ENCODE measurements at regions of chr22 and their contacts with region 1.

Region 1: GRCh38 chr22:20495861-20496681 is 476 bp upstream of the KLHL22 start:
- DNase-seq: peak; percentile 96
- ATAC-seq: peak; percentile 95
- H3K4me3 Mint-ChIP-seq: peak overlapping the region; percentile 76
- H3K27ac Mint-ChIP-seq: peak overlapping the region; percentile 70
- H3K4me1 Mint-ChIP-seq: peaks cover 29% of the 10 kb centered on the region
- H3K27me3 Mint-ChIP-seq: no peaks in the 10 kb centered on the region

Region 2: GRCh38 chr22:20319745-20320658 is 176.1 kb before region 1 on chr22 and contains the start of gene DGCR6L:
- CTCF ChIA-PET with region 1: interaction called, 6 read pairs
- POLR2A ChIA-PET with region 1: no interaction called
- intact Hi-C with region 1: loop called in 1 of 2 experiments (anchors 1 kb)
- DNase-seq: peak; percentile 99
- ATAC-seq: peak; percentile 53
- H3K4me3 Mint-ChIP-seq: peak within 1 kb of the TSS; percentile 85
- H3K27ac Mint-ChIP-seq: peak within 1 kb of the TSS; percentile 79
- H3K4me1 Mint-ChIP-seq: peaks cover 55% of the 10 kb centered on the region
- H3K27me3 Mint-ChIP-seq: no peaks in the 10 kb centered on the region
- total RNA-seq, gene DGCR6L: 22.4 to 24.8 TPM

Region 3: DNA sequence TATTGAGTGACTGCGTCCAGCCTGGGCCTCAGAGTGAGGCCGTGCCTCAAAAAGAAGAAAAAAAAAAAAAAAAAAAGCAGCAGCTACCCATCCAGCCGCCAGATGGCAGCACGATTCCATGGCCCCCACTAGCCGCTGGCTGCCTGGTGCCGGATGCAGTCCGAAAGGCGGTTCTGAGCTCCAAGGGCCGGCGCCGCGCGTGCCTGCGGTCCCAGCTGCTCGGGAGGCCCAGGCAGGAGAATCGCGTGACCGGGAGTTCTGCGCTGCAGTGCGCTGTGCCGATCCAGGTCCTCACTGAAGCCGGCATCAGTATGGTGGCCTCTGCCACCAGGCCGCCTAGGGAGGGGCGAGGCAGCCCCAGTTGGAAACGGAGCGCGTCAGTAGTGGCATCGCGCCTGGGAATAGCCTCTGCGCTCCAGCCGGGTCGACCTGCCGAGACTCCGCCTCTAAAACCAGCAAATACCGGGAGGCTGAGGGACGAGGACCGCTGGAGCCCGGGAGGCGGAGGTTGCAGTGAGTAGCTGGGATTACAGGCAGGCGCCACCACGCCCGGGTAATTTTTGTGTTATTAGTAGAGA is 77.8 kb before region 1 on chr22:
- CTCF ChIA-PET with region 1: no interaction called
- POLR2A ChIA-PET with region 1: no interaction called
- intact Hi-C with region 1: loop called (anchors 1 kb)
- DNase-seq: peak; percentile 82
- ATAC-seq: peak; percentile 71
- H3K4me3 Mint-ChIP-seq: no peak overlapping the region
- H3K27ac Mint-ChIP-seq: no peak overlapping the region
- H3K4me1 Mint-ChIP-seq: no peaks in the 10 kb centered on the region
- H3K27me3 Mint-ChIP-seq: no peaks in the 10 kb centered on the region

Region 4: DNA sequence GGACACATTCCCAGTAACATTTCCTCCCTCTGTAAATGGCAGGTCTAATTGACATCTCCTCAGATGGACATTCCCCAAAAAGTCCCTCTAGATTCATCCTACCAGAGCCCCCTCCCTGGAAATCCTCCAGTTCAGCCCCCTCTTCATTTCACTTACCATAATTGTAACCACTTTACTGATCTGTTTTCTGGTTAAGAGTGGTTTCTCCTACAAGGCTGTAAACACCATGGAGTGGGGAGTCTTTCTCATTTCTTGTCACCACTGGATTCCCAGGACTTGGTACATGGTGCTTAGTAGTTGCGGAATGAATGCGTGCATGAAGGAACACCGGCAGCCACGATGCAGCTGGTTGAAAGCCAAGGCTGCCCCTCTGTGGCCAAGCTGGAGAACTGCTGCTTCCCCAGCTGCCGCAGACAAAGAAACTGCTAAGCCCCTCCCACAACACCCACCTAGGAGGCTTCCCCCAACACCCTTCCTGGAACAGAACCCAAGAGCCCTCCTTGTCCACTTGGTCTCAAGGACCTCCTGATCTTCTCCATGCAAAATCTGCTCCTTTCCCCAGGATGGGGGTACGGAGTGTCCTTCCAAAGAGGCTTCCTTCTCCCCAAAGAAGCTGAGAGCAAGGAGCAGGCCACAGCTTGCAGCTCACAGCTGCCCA is 39.9 kb before region 1 on chr22:
- CTCF ChIA-PET with region 1: interaction called, 14 read pairs
- POLR2A ChIA-PET with region 1: no interaction called
- intact Hi-C with region 1: loop called (anchors 1 to 5 kb)
- DNase-seq: peak; percentile 88
- ATAC-seq: peak; percentile 95
- H3K4me3 Mint-ChIP-seq: no peak overlapping the region
- H3K27ac Mint-ChIP-seq: peak overlapping the region; percentile 59
- H3K4me1 Mint-ChIP-seq: peaks cover 20% of the 10 kb centered on the region
- H3K27me3 Mint-ChIP-seq: no peaks in the 10 kb centered on the region

Region 5: GRCh38 chr22:20475115-20475436 is 21.0 kb before region 1 on chr22:
- CTCF ChIA-PET with region 1: no interaction called
- POLR2A ChIA-PET with region 1: no interaction called
- intact Hi-C with region 1: loop called in 1 of 2 experiments (anchors 1 kb)
- DNase-seq: no peak
- ATAC-seq: peak; percentile 69
- H3K4me3 Mint-ChIP-seq: peak overlapping the region; percentile 48
- H3K27ac Mint-ChIP-seq: peak overlapping the region; percentile 86
- H3K4me1 Mint-ChIP-seq: peaks cover 43% of the 10 kb centered on the region
- H3K27me3 Mint-ChIP-seq: no peaks in the 10 kb centered on the region

Region 6: DNA sequence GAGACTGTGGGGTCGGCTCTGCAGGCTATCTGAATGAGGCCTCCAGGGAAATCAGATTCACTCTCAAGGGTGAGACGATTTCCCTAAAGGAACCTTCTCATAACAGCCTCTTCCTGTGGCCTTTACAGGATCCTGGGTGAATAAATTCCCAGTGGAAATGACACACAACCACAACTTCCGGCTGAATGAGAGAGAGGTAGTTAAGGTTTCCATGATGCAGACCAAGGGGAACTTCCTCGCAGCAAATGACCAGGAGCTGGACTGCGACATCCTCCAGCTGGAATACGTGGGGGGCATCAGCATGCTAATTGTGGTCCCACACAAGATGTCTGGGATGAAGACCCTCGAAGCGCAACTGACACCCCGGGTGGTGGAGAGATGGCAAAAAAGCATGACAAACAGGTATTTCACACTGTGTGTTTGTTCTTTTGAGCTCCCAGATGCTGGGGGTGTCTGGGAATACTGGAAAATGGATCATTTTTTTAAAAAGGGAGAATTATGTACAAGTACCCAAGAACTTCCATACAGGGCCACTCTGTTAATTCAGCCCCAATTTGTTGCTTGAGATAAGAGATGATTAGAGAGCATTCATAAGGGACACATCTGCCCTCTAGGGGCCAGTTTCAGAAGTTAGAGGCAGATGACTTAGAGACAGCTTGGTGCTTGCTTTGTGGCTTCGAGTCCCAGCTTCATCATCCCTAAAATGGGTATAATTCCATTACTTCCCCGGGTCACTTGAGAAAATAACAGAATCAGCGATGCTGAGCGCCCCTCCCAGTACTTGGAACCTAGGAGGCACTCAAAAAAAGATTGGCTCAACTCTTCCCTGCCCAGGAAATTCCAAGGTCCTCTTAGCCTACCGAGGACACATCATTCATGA is 288.0 kb after region 1 on chr22:
- CTCF ChIA-PET with region 1: no interaction called
- POLR2A ChIA-PET with region 1: no interaction called
- intact Hi-C with region 1: no loop called
- DNase-seq: peak; percentile 66
- ATAC-seq: no peak
- H3K4me3 Mint-ChIP-seq: no peak overlapping the region
- H3K27ac Mint-ChIP-seq: no peak overlapping the region
- H3K4me1 Mint-ChIP-seq: peaks cover 13% of the 10 kb centered on the region
- H3K27me3 Mint-ChIP-seq: no peaks in the 10 kb centered on the region